Heart right ventricle (tissue), 16 donors: ENCODE measurements at regions of chr9 and their contacts with region 1.

Region 1: GRCh38 chr9:87039809-87040392 is 92.6 kb upstream of the GAS1 start:
- DNase-seq: no peak
- ATAC-seq: no peak
- H3K4me3 ChIP-seq: no peak overlapping the region
- H3K27ac ChIP-seq: no peak overlapping the region
- H3K4me1 ChIP-seq: no peaks in the 10 kb centered on the region
- H3K27me3 ChIP-seq: no peaks in the 10 kb centered on the region
- CTCF ChIP-seq: no peak

Region 2: GRCh38 chr9:88551546-88552137 is 1511.7 kb after region 1 on chr9:
- intact Hi-C with region 1: loop called in 1 of 10 experiments (anchors 5 kb)
- DNase-seq: no peak
- ATAC-seq: no peak
- H3K4me3 ChIP-seq: no peak overlapping the region
- H3K27ac ChIP-seq: no peak overlapping the region
- H3K4me1 ChIP-seq: no peaks in the 10 kb centered on the region
- H3K27me3 ChIP-seq: no peaks in the 10 kb centered on the region
- CTCF ChIP-seq: no peak